K562 (cell line): ENCODE measurements at regions of chr1 and their contacts with region 1.

Region 1: DNA sequence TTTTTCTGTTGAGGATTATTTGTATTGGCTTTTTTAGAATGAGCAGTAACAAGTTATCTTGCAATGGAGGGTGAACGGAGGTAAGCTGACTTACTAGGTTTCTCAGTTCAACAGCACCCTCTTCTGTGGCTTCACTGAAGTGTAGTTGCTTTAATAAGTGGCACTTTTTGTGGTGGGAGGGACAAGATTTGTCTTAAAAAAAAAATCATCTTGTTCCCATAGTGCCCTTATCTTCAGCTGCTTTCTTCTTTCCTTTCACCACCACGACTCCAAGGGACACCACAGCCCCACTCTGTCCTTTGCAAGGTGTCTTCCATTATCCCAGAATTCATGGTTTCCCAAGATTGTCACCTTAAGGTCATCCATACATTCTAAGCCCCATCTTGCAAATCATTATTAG is 92.9 kb downstream of the PIGK start:
- DNase-seq: peak in 2 of 4 experiments; percentile 35 to 56
- ATAC-seq: peak; percentile 85
- H3K4me3 ChIP-seq: no peak overlapping the region
- H3K27ac ChIP-seq: no peak overlapping the region
- H3K4me1 ChIP-seq: no peaks in the 10 kb centered on the region
- H3K27me3 ChIP-seq: no peaks in the 10 kb centered on the region
- CTCF ChIP-seq: peak; percentile 22 to 67 (median 54); a peak in 5 of 6 replicates
- EP300 ChIP-seq: no peak
- POLR2A ChIP-seq: no peak
- RAD21 ChIP-seq: peak; percentile 59 to 64

Region 2: DNA sequence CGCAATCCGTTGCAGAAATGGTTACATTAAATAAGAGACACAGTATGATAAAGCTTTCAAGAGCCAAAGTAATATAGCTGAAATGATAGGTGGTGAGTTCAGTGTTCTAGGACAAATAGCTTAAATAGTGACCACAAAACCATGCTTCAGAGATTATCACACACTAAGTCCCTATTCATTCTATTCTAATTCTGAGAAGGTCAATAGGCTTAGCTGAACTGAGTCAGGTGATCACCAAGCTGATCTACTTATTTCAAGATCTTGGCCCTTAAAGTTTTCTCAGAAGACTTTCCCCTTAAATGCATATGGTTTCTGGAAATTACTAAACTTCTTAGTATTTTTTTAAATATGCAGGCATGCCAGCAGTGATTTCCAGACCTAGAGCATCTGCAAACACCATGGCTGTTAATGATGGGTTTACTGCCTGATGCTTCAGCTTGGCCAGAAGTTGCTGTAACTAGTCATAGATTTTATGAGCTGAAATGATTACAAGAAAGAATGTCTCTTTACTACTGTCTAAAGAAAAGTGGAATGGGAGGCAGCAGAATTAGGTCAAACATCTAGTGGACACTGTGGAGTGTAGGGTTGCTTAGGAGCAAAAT is 808.9 kb before region 1 on chr1:
- CTCF ChIA-PET with region 1: no interaction called
- POLR2A ChIA-PET with region 1: no interaction called
- in situ Hi-C with region 1: no loop called
- intact Hi-C with region 1: no loop called
- DNase-seq: no peak
- ATAC-seq: no peak
- H3K4me3 ChIP-seq: no peak overlapping the region
- H3K27ac ChIP-seq: no peak overlapping the region
- H3K4me1 ChIP-seq: no peaks in the 10 kb centered on the region
- H3K27me3 ChIP-seq: no peaks in the 10 kb centered on the region
- CTCF ChIP-seq: no peak
- EP300 ChIP-seq: no peak
- POLR2A ChIP-seq: no peak
- RAD21 ChIP-seq: no peak

Region 3: DNA sequence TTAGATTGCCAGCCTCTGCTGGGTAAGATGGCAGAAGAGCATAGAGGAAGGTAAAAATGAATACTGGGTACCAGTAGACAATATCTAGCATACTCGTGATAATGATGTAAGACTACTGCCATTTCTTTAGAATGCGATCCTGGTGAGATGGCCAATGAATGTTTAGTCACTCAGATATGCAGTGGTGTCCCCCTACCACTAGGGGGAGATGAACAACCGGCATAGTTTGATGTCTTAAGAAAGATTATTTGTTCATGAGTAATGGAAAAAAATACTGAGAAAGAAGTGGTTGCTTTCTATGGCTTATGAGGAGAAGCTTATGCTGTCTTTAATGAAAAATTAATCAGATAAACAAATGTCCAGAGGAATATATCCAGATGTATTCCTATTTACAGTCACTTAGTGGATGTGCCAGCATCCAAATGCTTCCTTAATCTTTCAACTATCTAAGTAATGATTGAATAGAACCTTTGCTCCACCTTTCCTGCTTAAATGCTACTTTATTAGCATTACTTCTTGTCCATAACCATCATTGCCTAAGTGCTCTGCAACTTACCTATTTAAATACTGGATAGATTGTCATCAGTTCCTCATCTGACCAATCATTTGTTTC is 795.2 kb before region 1 on chr1:
- CTCF ChIA-PET with region 1: no interaction called
- POLR2A ChIA-PET with region 1: no interaction called
- in situ Hi-C with region 1: no loop called
- intact Hi-C with region 1: loop called (anchors 10 kb)
- DNase-seq: peak; percentile 31 to 53 (median 46)
- ATAC-seq: peak; percentile 77; the same call in 2 of the 3 replicates
- H3K4me3 ChIP-seq: no peak overlapping the region
- H3K27ac ChIP-seq: no peak overlapping the region
- H3K4me1 ChIP-seq: no peaks in the 10 kb centered on the region
- H3K27me3 ChIP-seq: no peaks in the 10 kb centered on the region
- CTCF ChIP-seq: peak; percentile 38 to 82 (median 72)
- EP300 ChIP-seq: no peak
- POLR2A ChIP-seq: no peak
- RAD21 ChIP-seq: peak; percentile 55 to 65

Region 4: GRCh38 chr1:76764638-76765454 is 361.5 kb before region 1 on chr1:
- CTCF ChIA-PET with region 1: no interaction called
- POLR2A ChIA-PET with region 1: no interaction called
- in situ Hi-C with region 1: no loop called
- intact Hi-C with region 1: no loop called
- DNase-seq: no peak
- ATAC-seq: no peak
- H3K4me3 ChIP-seq: no peak overlapping the region
- H3K27ac ChIP-seq: no peak overlapping the region
- H3K4me1 ChIP-seq: no peaks in the 10 kb centered on the region
- H3K27me3 ChIP-seq: no peaks in the 10 kb centered on the region
- CTCF ChIP-seq: no peak
- EP300 ChIP-seq: no peak
- POLR2A ChIP-seq: no peak
- RAD21 ChIP-seq: no peak

Region 5: DNA sequence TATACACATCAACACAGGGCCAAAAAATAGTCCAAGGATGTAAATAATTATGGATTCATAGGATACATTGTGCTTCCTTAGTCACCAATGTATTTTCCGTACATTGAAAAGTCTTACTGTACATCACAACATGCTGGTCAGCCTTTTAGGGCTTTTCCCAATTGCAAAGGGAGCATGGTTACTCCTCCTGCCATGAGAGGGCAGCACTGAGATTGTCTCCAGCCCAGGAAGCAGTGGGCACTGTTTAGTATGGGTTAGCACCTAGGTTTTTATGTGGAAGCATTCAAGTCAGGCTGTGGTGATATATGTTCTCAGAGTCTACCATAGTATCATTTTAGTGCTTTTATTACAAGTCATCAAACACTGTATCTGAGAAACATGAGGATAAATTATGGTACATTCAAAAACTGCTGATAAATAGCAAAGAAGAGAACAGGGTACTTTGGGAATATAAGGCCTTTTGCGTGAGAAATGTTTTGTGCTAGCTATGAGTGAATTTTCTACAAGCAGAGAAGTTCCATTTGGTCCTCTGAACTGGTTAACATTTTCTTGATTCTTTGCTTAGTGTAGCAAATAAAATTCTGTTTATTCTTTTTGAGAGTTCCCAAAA is 225.0 kb before region 1 on chr1:
- CTCF ChIA-PET with region 1: no interaction called
- POLR2A ChIA-PET with region 1: no interaction called
- in situ Hi-C with region 1: no loop called
- intact Hi-C with region 1: loop called (anchors 1 kb)
- DNase-seq: peak; percentile 25 to 57 (median 36)
- ATAC-seq: peak; percentile 93
- H3K4me3 ChIP-seq: no peak overlapping the region
- H3K27ac ChIP-seq: no peak overlapping the region
- H3K4me1 ChIP-seq: no peaks in the 10 kb centered on the region
- H3K27me3 ChIP-seq: no peaks in the 10 kb centered on the region
- CTCF ChIP-seq: peak; percentile 55 to 68 (median 63)
- EP300 ChIP-seq: no peak
- POLR2A ChIP-seq: no peak
- RAD21 ChIP-seq: peak; percentile 29 to 55; a peak in 3 of 4 replicates

Region 6: GRCh38 chr1:77175230-77175844 is 49.0 kb after region 1 on chr1:
- CTCF ChIA-PET with region 1: no interaction called
- POLR2A ChIA-PET with region 1: no interaction called
- in situ Hi-C with region 1: no loop called
- intact Hi-C with region 1: no loop called
- DNase-seq: peak in 1 of 4 experiments; percentile 8
- ATAC-seq: no peak
- H3K4me3 ChIP-seq: no peak overlapping the region
- H3K27ac ChIP-seq: no peak overlapping the region
- H3K4me1 ChIP-seq: no peaks in the 10 kb centered on the region
- H3K27me3 ChIP-seq: no peaks in the 10 kb centered on the region
- CTCF ChIP-seq: no peak
- EP300 ChIP-seq: no peak
- POLR2A ChIP-seq: no peak
- RAD21 ChIP-seq: no peak

Region 7: DNA sequence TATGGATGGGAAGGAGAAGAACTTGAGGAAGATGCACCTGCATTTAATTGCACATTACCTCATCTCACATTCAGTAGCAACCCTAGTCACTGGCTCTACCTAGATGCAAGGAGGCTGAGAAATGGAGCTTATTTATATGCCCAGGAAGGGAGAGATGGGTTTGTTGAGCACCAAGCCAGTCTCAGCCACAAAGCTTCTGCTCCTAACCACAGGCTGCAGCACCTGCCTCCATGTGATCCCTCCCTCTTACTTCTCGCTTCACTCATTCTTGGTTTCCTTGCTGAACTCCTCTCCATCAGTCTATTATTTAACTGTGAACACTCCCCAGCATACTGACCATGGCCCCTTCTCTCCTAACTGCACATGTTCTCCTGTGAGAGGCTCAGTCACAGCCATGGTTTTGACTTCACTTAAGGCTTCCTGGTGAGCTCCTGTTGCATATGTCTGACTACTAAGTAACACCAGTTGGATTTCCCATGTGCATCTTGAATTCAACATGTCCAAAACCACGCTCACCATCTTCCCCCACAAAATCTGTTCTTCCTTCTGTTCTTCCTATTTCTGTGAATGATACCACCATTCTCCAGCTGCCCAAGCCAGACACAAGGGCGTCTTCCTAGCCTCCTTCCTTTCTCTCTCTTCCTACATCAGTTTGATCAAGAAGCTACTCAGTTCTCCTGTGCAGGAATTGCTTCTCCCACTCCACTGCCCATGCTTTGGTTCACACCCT is 295.4 kb after region 1 on chr1:
- CTCF ChIA-PET with region 1: no interaction called
- POLR2A ChIA-PET with region 1: no interaction called
- in situ Hi-C with region 1: no loop called
- intact Hi-C with region 1: no loop called
- DNase-seq: no peak
- ATAC-seq: no peak
- H3K4me3 ChIP-seq: no peak overlapping the region
- H3K27ac ChIP-seq: no peak overlapping the region
- H3K4me1 ChIP-seq: no peaks in the 10 kb centered on the region
- H3K27me3 ChIP-seq: no peaks in the 10 kb centered on the region
- CTCF ChIP-seq: no peak
- EP300 ChIP-seq: no peak
- POLR2A ChIP-seq: no peak
- RAD21 ChIP-seq: no peak